ENCODE measurements at regions of chr2 and their contacts with region 1.

Region 1: DNA sequence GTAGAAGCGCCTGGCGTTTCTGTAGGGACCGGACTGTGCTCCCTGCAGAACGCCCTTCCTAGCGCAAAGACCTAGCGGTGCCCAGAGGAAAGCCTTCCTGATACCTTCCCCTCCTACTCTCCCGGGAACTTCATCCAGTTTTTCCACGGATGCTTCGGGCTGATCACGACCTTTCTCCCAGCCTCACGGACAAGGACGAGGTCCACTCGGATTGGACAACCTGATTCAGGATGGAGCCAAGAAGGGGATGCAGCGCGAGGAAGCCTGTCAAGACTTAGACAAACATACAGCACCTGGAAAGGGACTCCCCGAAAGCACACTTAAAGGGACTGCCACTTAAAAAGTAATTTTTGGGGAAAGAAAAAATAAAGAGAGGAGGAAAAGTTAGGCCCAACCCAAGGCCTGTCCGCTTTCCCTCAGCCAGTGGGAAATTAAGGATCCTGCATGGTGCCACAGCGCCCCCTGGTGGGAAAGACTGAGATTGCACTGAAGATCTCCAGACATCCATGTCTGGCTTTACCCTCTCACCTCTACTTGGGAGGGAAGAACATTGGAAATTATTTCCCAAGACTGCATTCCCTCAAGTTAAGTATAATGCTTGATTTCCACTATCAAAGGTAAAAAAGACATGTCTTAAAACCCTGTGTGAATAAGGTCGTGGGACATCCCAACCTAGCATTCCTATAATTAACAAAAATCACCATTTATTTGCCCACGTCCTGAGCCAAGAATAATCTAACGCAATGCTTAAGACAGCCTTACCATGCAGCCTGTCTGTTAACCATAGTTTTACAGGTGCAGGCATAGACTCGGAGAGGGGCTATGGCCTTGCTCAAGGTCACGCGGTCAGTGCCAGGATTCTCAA is 13.4 kb upstream of the COPS8 start:
- DNase-seq: peak; percentile 46 to 83
- H3K4me3 ChIP-seq: no peak overlapping the region
- H3K4me1 ChIP-seq: no peaks in the 10 kb centered on the region
- H3K27me3 ChIP-seq: no peaks in the 10 kb centered on the region

Region 2: DNA sequence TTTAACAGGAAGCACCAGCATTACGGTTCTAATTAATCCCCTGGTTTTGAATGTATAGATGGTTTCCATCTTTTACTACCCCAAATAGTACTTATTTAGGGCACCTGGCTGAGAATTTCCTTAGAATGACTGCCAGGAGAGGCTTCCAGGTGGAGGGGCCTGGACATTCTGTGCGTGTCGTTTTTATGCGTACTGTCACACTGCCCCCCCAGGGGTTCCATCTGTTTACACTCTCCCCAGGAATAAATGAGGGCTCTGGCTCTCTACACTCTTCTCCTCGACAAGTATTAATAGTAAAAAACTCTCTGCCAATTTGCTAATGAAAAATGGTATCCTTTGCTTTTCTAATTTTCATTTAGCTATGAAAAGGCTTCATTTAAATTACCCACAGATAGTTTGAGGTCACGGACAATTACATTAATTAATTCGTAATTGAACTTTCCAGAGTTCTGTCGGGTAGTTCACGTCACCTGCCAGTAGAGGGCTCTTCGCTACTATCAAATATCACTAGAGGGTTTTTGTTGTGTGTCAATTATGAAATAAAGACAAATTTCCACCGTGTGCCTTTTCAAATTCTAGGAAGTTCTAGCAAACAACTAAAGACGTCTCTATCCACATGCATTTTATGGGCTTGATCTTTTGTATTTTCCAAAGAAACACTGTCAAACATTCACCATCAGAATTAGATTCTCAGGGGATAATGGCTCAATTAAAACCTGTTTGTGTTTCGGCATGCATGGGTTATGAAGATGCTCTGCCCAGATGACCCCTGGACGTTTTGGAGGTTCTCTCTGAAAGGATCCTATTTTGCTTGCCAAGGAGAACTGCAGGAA is 719.3 kb before region 1 on chr2:
- in situ Hi-C with region 1: loop called (anchors 5 kb)
- DNase-seq: peak; percentile 49 to 53
- H3K4me3 ChIP-seq: no peak overlapping the region
- H3K4me1 ChIP-seq: no peaks in the 10 kb centered on the region
- H3K27me3 ChIP-seq: peaks cover 6% of the 10 kb centered on the region; the same call in 1 of the 2 replicates

Region 3: GRCh38 chr2:236512902-236513435 is 559.3 kb before region 1 on chr2:
- in situ Hi-C with region 1: loop called (anchors 5 kb)
- DNase-seq: peak; percentile 15 to 61
- H3K4me3 ChIP-seq: no peak overlapping the region
- H3K4me1 ChIP-seq: no peaks in the 10 kb centered on the region
- H3K27me3 ChIP-seq: no peaks in the 10 kb centered on the region

Region 4: DNA sequence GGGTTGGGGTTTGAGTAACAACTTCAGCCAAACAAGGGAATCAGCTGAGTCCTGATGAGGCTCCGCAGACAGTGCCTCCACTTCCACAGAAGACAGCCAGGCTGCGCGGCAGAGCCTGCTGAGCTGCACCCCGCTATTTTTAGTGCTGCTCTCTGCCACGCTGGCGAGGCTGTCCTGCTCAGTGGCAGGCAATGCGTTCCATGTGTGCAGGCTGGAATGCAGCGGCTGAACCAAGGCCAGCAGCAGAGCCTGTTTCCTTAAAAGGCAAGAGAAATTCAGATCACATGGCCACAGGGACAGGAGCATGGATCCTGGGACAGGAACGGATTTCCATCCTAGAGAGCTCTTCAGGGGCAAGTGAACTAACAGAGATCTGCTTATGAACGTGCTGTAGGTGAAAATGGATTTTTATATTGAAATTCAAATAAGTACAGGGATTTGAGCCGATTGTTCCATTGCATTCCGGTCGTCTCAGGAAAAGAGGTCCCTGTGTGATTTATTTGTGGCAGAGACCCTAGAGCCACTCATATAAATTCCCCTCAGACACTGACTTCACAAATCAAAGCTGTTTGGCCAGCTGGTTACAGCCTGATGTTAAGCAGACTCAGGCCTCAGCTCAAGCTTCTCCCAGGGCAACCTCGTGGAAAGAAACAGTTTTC is 243.0 kb after region 1 on chr2:
- in situ Hi-C with region 1: no loop called
- DNase-seq: no peak
- H3K4me3 ChIP-seq: no peak overlapping the region
- H3K4me1 ChIP-seq: no peaks in the 10 kb centered on the region
- H3K27me3 ChIP-seq: no peaks in the 10 kb centered on the region

Measured in HAP-1 (cell line).